WTC11 (cell line): ENCODE measurements at regions of chr1 and their contacts with region 1.

Region 1: DNA sequence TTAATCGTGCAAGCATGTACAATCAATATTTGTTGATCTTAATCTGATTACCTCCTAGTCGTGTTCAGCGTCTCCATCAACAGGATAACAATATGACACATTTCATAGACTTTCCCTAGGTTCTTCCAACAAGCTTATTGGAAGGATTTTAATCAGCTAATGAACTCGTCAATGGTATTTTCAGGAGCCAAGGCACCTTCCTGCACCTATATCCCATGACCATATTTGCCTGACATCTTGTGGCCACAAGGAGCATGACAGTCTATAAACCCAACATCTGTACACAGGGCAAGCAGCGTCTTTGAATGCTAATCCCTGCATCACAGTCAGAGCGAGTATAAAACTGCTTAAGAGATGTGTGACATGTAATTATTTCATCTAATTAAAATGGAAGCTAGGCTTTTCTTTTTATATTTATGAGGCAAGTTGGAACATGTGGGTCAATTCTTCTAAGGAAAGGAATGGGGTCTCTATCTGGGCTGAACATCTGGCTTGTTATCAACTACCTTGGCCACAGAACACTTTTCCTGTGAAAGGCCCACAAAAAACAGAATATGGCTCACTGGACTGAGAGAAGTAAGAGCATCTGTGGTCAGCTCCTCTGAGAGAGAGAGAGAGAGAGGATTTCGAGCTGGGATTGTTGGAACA is 388.8 kb downstream of the NTNG1 start:
- DNase-seq: peak; percentile 19
- ATAC-seq: peak; percentile 93
- H3K4me3 Mint-ChIP-seq: no peak overlapping the region
- H3K27ac Mint-ChIP-seq: no peak overlapping the region
- H3K4me1 Mint-ChIP-seq: peaks cover 8% of the 10 kb centered on the region
- H3K27me3 Mint-ChIP-seq: no peaks in the 10 kb centered on the region
- CTCF ChIP-seq: peak; percentile 80

Region 2: GRCh38 chr1:107196973-107197562 is 332.6 kb before region 1 on chr1:
- CTCF ChIA-PET with region 1: interaction called, 10 read pairs
- POLR2A ChIA-PET with region 1: no interaction called
- DNase-seq: peak; percentile 49
- ATAC-seq: peak; percentile 87
- H3K4me3 Mint-ChIP-seq: no peak overlapping the region
- H3K27ac Mint-ChIP-seq: no peak overlapping the region
- H3K4me1 Mint-ChIP-seq: peaks cover 5% of the 10 kb centered on the region
- H3K27me3 Mint-ChIP-seq: no peaks in the 10 kb centered on the region
- CTCF ChIP-seq: peak; percentile 79

Region 3: DNA sequence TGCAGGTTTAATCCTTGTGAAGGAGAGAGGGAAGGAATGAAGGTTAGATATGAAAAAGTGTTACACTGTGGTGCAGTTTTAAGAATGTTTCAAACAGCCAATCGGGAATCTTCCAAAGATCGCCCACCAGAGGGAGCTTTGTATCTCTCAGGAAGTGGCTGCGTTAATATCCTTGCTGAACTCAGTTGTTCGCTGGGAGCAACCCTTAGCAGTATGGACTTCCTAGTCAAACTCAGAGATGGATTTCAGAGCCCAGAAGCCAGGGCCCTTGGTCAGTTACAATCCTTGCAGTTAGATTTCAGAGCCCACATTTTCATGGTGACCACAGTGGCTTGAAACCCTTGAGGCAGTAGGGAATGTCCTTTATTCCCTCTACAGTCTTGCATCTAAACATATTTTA is 252.6 kb before region 1 on chr1:
- CTCF ChIA-PET with region 1: interaction called, 35 read pairs
- POLR2A ChIA-PET with region 1: no interaction called
- DNase-seq: peak; percentile 46
- ATAC-seq: peak; percentile 90
- H3K4me3 Mint-ChIP-seq: no peak overlapping the region
- H3K27ac Mint-ChIP-seq: no peak overlapping the region
- H3K4me1 Mint-ChIP-seq: peaks cover 16% of the 10 kb centered on the region
- H3K27me3 Mint-ChIP-seq: no peaks in the 10 kb centered on the region
- CTCF ChIP-seq: no peak

Region 4: DNA sequence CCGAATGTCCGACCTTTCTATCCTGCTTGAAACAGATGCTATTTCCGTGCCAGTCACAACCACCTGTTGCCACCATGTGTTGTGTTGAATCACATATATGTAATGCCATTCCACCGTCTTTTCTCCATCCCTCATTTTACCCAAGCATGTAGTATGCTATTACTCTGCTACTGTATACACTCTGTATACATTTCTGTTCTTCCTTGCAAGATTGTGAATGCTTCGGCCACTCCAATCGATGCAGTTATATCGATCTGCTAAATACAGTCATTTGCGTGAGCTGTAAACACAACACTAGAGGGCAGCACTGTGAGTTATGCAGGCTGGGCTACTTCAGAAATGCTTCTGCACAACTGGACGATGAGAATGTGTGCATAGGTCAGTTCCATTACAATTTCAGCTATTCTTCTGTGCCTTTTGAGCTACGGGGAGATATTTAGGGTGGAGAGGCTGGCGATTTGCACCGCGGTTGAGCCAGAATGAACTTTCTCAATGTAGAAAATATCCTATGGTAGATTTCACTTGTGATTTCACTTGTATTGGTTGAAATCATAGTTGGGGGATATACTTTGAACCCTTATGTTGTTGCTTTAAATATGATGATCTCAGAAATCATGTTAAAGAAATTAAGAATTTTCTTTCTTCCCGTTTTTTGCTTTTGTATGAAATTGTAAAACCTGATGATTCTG is 98.9 kb before region 1 on chr1:
- CTCF ChIA-PET with region 1: interaction called, 14 read pairs
- POLR2A ChIA-PET with region 1: no interaction called
- DNase-seq: peak; percentile 24
- ATAC-seq: peak; percentile 72
- H3K4me3 Mint-ChIP-seq: no peak overlapping the region
- H3K27ac Mint-ChIP-seq: no peak overlapping the region
- H3K4me1 Mint-ChIP-seq: peaks cover 35% of the 10 kb centered on the region
- H3K27me3 Mint-ChIP-seq: no peaks in the 10 kb centered on the region
- CTCF ChIP-seq: peak; percentile 56

Region 5: GRCh38 chr1:107515702-107516101 is 13.9 kb before region 1 on chr1:
- CTCF ChIA-PET with region 1: interaction called, 10 read pairs
- POLR2A ChIA-PET with region 1: no interaction called
- DNase-seq: no peak
- ATAC-seq: no peak; the same call in 1 of the 2 replicates
- H3K4me3 Mint-ChIP-seq: no peak overlapping the region
- H3K27ac Mint-ChIP-seq: no peak overlapping the region
- H3K4me1 Mint-ChIP-seq: peaks cover 9% of the 10 kb centered on the region
- H3K27me3 Mint-ChIP-seq: no peaks in the 10 kb centered on the region
- CTCF ChIP-seq: no peak

Region 6: DNA sequence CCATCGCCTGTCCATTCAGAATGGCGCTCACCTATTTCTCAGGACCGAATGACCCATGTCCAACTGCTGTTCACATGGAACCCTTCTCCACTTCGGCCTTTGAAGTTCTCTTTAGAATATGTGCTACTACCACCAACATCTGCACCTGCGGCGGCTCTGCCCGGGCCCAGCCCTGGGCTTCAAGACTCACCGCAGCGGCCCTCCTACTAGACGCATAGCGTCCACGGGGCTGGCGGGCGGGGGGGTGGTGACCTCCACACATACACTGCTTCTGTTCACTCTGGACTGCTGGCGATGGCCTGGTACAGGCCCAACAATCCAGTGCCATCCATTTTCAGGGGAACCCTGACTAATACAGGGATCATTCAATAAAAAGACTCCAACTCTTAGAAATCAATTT is 41.1 kb after region 1 on chr1:
- CTCF ChIA-PET with region 1: no interaction called
- POLR2A ChIA-PET with region 1: no interaction called
- DNase-seq: no peak
- ATAC-seq: no peak
- H3K4me3 Mint-ChIP-seq: no peak overlapping the region
- H3K27ac Mint-ChIP-seq: no peak overlapping the region
- H3K4me1 Mint-ChIP-seq: no peaks in the 10 kb centered on the region
- H3K27me3 Mint-ChIP-seq: no peaks in the 10 kb centered on the region
- CTCF ChIP-seq: no peak

Region 7: GRCh38 chr1:107748531-107748930 is 218.9 kb after region 1 on chr1:
- CTCF ChIA-PET with region 1: interaction called, 15 read pairs
- POLR2A ChIA-PET with region 1: interaction called, 3 read pairs
- DNase-seq: no peak
- ATAC-seq: no peak
- H3K4me3 Mint-ChIP-seq: no peak overlapping the region
- H3K27ac Mint-ChIP-seq: no peak overlapping the region
- H3K4me1 Mint-ChIP-seq: peaks cover 19% of the 10 kb centered on the region
- H3K27me3 Mint-ChIP-seq: no peaks in the 10 kb centered on the region
- CTCF ChIP-seq: no peak